K562 (cell line): ENCODE measurements at regions of chr22 and their contacts with region 1.

Region 1: DNA sequence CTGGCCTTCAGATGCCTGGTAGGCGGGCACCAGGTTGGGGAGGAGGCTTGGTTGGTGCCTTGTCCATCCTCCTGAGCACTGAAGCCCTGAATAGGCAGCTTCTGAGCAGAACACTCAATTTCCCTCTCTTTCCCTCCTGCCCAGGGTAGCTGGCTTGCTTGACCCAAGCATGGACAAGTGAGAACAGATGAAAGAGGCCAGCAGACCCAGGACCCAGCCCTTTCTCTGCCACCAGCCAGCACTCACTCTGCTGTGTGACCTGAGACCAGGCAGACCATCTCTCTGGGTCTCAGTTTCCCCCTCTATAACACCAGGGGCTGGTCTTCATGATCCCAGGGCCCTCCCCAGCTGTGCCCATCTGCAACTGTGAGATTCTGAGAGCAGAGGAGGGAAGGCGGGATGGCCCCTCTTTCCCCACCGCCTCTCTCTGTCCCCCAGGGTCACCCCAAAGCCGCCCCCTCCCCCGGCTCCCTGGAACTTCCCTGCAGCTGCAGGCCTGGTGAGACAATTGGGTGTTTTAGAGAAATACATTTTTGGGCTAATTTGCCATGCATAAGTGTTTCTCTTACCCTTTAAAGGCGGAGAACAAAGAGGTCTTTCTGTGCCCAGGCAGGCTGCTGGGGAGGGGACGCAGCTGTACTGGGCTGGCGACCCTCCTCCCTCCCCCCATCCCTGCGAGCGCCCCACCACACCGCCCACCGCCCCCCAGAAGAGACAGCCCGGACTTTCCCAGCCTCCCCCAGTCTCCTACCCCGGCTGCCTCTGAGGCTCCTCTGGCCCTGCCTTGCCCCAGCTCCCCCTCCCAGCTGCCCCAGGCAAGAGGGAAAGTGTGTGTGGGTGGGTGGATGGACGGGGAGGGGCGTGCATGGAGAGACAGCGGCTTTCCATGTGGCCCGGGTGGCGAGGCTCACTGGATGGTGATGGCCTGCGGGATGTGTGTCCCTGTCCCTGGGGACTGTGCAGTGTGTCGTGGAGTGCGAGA is 30.8 kb upstream of the PICK1 start:
- DNase-seq: no peak
- ATAC-seq: no peak
- H3K4me3 ChIP-seq: no peak overlapping the region
- H3K27ac ChIP-seq: no peak overlapping the region
- H3K4me1 ChIP-seq: peaks cover 6 to 14% of the 10 kb centered on the region in 2 experiments; a peak in 3 of 5 replicates
- H3K27me3 ChIP-seq: no peaks in the 10 kb centered on the region; a peak in 1 of 5 replicates
- CTCF ChIP-seq: no peak
- EP300 ChIP-seq: no peak
- POLR2A ChIP-seq: no peak
- RAD21 ChIP-seq: no peak

Region 2: GRCh38 chr22:37953437-37954179 is 72.8 kb before region 1 on chr22 and contains the starts of genes C22orf23 and POLR2F:
- CTCF ChIA-PET with region 1: no interaction called
- POLR2A ChIA-PET with region 1: no interaction called
- in situ Hi-C with region 1: no loop called
- intact Hi-C with region 1: loop called (anchors 10 kb)
- DNase-seq: peak; percentile 92 to 95 (median 94)
- ATAC-seq: peak; percentile 92
- H3K4me3 ChIP-seq: peak within 1 kb of the TSS; percentile 82
- H3K27ac ChIP-seq: peak within 1 kb of the TSS; percentile 82
- H3K4me1 ChIP-seq: peaks cover 7 to 20% of the 10 kb centered on the region in 2 experiments; a peak in 3 of 5 replicates
- H3K27me3 ChIP-seq: no peaks in the 10 kb centered on the region
- CTCF ChIP-seq: 0 out of 6 replicates have a peak, but pooled peaks of 1 of the 3 experiments have one; percentile 10
- EP300 ChIP-seq: no peak
- POLR2A ChIP-seq: peak; percentile 87
- RAD21 ChIP-seq: no peak
- polyA plus RNA-seq, gene C22orf23: 0.53 to 0.91 TPM
- polyA plus RNA-seq, gene POLR2F: 187 to 195 TPM